Endothelial cell of umbilical vein (primary cell): ENCODE measurements at regions of chr7 and their contacts with region 1.

Region 1: GRCh38 chr7:22082886-22083703 is 137.4 kb upstream of the CDCA7L start:
- DNase-seq: peak; percentile 86
- H3K4me3 ChIP-seq: peak overlapping the region; percentile 22 to 69 (median 66)
- H3K27ac ChIP-seq: peak overlapping the region; percentile 6
- H3K4me1 ChIP-seq: peaks cover 11% of the 10 kb centered on the region
- H3K27me3 ChIP-seq: peaks cover 10 to 19% of the 10 kb centered on the region in 2 experiments
- CTCF ChIP-seq: peak; percentile 98 to 99
- POLR2A ChIP-seq: peak; percentile 69

Region 2: GRCh38 chr7:20778063-20778721 is 1304.9 kb before region 1 on chr7:
- CTCF ChIA-PET with region 1: interaction called, 16 read pairs
- POLR2A ChIA-PET with region 1: no interaction called
- dilution Hi-C with region 1: no loop called
- intact Hi-C with region 1: loop called (anchors 2 kb)
- DNase-seq: peak; percentile 30
- H3K4me3 ChIP-seq: peak overlapping the region in 2 of 3 experiments; percentile 30 to 46
- H3K27ac ChIP-seq: no peak overlapping the region
- H3K4me1 ChIP-seq: peaks cover 5% of the 10 kb centered on the region
- H3K27me3 ChIP-seq: peaks cover 54 to 86% of the 10 kb centered on the region in 2 experiments
- CTCF ChIP-seq: peak; percentile 72 to 78
- POLR2A ChIP-seq: no peak

Region 3: GRCh38 chr7:21253740-21254687 is 829.1 kb before region 1 on chr7:
- CTCF ChIA-PET with region 1: interaction called, 49 read pairs
- POLR2A ChIA-PET with region 1: no interaction called
- dilution Hi-C with region 1: no loop called
- intact Hi-C with region 1: loop called (anchors 2 kb)
- DNase-seq: peak; percentile 78
- H3K4me3 ChIP-seq: no peak overlapping the region
- H3K27ac ChIP-seq: no peak overlapping the region
- H3K4me1 ChIP-seq: no peaks in the 10 kb centered on the region
- H3K27me3 ChIP-seq: peaks cover 28 to 67% of the 10 kb centered on the region in 2 experiments
- CTCF ChIP-seq: peak; percentile 52 to 72
- POLR2A ChIP-seq: no peak

Region 4: DNA sequence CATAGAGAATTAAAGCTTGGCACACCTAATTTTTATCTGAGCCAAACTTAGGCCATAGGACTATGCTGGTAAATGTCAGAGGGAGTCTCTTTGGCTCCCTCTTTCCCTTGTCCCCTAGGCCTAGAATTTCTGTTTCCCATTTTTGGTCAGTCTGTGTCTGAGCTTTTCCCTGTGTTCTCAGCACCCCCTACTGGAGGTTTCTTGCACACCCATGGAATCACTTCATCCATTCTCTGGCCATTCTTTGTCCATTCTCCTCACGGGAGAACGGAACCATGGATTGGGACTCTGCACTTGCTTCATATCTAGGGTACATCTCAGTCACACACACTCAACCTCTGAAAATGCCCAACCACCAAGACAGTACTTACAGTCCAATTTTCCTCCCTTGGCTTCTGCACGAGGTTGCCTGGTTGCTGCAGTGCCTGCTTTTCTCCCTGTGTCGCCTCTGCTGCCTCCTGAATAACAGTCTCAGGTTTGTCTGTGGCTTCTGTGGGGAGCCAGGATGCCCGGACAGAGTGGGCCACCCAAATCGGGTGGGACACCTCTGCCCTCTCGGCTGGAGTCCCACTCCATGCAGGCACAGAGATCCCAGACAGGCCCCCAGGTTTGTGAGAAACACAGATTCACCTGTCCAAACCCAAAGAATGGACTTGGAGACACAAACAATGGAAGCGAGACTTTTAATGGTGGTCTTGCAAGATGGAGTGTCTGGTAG is 575.3 kb before region 1 on chr7:
- CTCF ChIA-PET with region 1: interaction called, 7 read pairs
- POLR2A ChIA-PET with region 1: no interaction called
- dilution Hi-C with region 1: no loop called
- intact Hi-C with region 1: loop called (anchors 2 kb)
- DNase-seq: peak; percentile 52
- H3K4me3 ChIP-seq: no peak overlapping the region
- H3K27ac ChIP-seq: no peak overlapping the region
- H3K4me1 ChIP-seq: no peaks in the 10 kb centered on the region
- H3K27me3 ChIP-seq: no peaks in the 10 kb centered on the region
- CTCF ChIP-seq: peak; percentile 76
- POLR2A ChIP-seq: no peak

Region 5: DNA sequence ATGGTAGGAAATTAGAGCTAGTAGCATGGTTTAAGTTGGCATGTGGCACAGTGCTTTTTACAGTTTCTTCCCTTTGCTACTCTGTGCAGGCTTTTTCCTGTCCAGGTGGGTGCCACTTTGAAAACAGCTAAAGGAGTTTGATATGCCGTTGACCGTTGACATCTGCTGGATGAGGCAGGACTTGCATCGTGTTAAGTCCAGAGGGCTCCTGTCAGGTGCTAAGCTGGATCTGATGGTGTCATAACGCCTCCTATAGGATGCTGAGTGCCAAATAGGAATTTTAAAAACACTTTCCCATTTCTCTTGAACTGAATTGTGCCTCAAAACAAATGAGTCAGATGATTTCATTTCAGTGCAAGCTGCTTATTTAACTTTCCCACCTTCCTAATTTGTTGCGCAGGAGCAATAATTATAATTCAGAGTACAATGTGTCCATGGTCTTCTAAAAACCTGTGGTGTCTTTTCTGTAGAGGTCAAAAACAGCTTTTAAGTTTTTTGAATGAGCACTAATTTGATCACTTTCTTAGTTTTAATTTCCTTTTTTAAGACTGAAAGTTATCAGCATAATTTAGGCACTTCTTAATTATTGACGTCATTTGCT is 315.7 kb before region 1 on chr7:
- CTCF ChIA-PET with region 1: interaction called, 4 read pairs
- POLR2A ChIA-PET with region 1: no interaction called
- dilution Hi-C with region 1: no loop called
- intact Hi-C with region 1: loop called (anchors 5 kb)
- DNase-seq: peak; percentile 60
- H3K4me3 ChIP-seq: no peak overlapping the region
- H3K27ac ChIP-seq: no peak overlapping the region
- H3K4me1 ChIP-seq: no peaks in the 10 kb centered on the region
- H3K27me3 ChIP-seq: peaks cover 8% of the 10 kb centered on the region in 2 experiments
- CTCF ChIP-seq: peak; percentile 42 to 47
- POLR2A ChIP-seq: no peak

Region 6: DNA sequence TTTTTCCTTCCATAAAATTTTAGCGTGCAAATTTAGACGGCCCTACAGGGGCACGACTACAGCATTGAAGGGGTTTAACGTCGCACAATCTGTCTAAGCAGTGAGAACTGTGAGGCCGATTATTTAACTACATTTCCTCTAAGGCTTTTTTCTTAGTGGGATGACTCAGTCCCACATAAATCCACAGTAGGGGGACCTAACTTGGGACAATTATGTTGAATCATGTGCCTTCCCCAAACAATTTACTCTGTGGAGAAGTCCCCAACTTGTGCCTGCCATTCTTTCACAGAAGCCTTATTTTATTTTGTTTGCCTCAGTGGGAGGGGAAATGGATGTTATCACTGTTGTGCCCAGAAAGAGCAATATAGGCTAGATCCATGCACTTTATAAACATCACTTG is 57.1 kb before region 1 on chr7:
- CTCF ChIA-PET with region 1: no interaction called
- POLR2A ChIA-PET with region 1: no interaction called
- dilution Hi-C with region 1: no loop called
- intact Hi-C with region 1: no loop called
- DNase-seq: no peak
- H3K4me3 ChIP-seq: no peak overlapping the region
- H3K27ac ChIP-seq: no peak overlapping the region
- H3K4me1 ChIP-seq: no peaks in the 10 kb centered on the region
- H3K27me3 ChIP-seq: peaks cover 2 to 5% of the 10 kb centered on the region in 2 experiments
- CTCF ChIP-seq: no peak
- POLR2A ChIP-seq: no peak

Region 7: GRCh38 chr7:22103255-22103969 is 20.3 kb after region 1 on chr7:
- CTCF ChIA-PET with region 1: interaction called, 17 read pairs
- POLR2A ChIA-PET with region 1: no interaction called
- dilution Hi-C with region 1: no loop called
- intact Hi-C with region 1: no loop called
- DNase-seq: peak; percentile 73
- H3K4me3 ChIP-seq: no peak overlapping the region
- H3K27ac ChIP-seq: no peak overlapping the region
- H3K4me1 ChIP-seq: no peaks in the 10 kb centered on the region
- H3K27me3 ChIP-seq: peaks cover 17 to 21% of the 10 kb centered on the region in 2 experiments
- CTCF ChIP-seq: peak; percentile 72 to 78
- POLR2A ChIP-seq: no peak

Region 8: GRCh38 chr7:22219036-22219435 is 135.9 kb after region 1 on chr7:
- CTCF ChIA-PET with region 1: no interaction called
- POLR2A ChIA-PET with region 1: no interaction called
- dilution Hi-C with region 1: no loop called
- intact Hi-C with region 1: no loop called
- DNase-seq: peak; percentile 87
- H3K4me3 ChIP-seq: peak overlapping the region; percentile 41 to 85 (median 73)
- H3K27ac ChIP-seq: peak overlapping the region; percentile 98
- H3K4me1 ChIP-seq: peaks cover 60% of the 10 kb centered on the region
- H3K27me3 ChIP-seq: no peaks in the 10 kb centered on the region
- CTCF ChIP-seq: no peak
- POLR2A ChIP-seq: peak; percentile 63